Dorsolateral prefrontal cortex (tissue), 120 donors: ENCODE measurements at regions of chr12 and their contacts with region 1.

Region 1: DNA sequence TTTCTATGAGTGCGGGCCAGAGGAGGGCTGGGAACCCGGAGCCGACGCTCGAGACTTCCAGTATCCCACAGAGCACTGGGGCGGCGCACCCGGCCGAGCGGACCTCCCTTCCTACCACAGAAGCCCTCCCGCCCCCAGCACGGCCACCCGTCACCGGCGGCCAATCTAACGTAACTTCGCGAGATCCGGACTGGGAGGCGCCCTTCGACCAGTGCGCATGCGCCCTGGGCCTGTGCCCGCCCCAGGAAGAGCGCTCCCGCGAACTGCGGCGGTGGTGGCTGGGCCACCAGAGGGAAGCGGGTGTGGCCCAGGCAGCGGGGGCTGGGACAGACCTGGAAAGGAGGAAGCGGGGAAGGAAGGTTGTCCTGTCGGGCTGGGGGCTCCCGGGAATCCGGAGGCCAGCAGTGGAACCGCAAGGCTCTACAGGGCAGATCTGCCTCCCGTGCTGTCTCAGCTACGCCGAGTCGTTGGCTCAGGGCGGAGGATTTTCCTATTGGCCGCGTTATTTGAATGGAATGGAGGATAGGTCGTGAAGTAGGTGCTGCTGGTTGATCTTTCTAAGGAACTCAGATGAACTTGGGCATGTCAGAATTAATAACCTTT is at the start of gene PPP1R12A:
- DNase-seq: peak; percentile 91 to 97 (median 94)
- H3K4me3 ChIP-seq: peak within 1 kb of the TSS; percentile 55 to 99 (median 91)
- H3K27ac ChIP-seq: peak within 1 kb of the TSS; percentile 51 to 99 (median 96)
- H3K27me3 ChIP-seq: no peaks in the 10 kb centered on the region
- CTCF ChIP-seq: peak in 49 of 56 donors; percentile 4 to 65 (median 42)
- total RNA-seq, gene PPP1R12A: 96.4 to 234 (median 174) TPM

Region 2: DNA sequence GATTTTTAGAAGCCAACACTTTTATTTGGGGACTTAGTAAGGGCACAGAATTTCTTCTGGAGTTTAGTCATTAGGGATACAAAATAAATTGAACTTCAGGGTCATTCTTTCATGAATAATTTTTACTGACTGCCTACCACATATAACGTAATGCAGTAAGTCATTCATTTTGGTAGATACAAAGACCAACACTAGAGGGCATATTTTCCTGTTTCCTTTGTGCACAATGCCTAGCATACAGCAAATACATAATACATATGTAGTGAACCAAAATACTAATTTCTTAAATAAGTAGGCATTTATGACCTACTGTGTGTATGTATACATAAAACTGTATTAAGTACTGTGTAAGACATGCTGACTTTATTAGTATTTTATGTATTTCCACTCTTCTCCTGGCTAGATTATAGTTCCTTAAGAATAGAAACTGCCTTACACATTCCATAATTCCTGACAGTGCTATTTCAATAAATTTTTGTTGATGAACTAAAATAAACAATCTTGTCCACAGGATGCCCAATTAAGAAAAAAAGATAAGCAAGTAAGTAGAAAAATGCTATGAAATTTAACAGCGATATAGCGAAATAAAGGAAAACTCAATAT is 48.1 kb before region 1 on chr12:
- intact Hi-C with region 1: loop called in 1 of 2 experiments (anchors 5 kb)
- DNase-seq: no peak
- H3K4me3 ChIP-seq: no peak overlapping the region
- H3K27ac ChIP-seq: no peak overlapping the region
- H3K27me3 ChIP-seq: no peaks in the 10 kb centered on the region
- CTCF ChIP-seq: peak; percentile 23 to 70 (median 56)

Region 3: GRCh38 chr12:79920421-79921238 is 14.5 kb before region 1 on chr12:
- intact Hi-C with region 1: no loop called
- DNase-seq: no peak
- H3K4me3 ChIP-seq: no peak overlapping the region
- H3K27ac ChIP-seq: no peak overlapping the region
- H3K27me3 ChIP-seq: no peaks in the 10 kb centered on the region
- CTCF ChIP-seq: no peak

Region 4: DNA sequence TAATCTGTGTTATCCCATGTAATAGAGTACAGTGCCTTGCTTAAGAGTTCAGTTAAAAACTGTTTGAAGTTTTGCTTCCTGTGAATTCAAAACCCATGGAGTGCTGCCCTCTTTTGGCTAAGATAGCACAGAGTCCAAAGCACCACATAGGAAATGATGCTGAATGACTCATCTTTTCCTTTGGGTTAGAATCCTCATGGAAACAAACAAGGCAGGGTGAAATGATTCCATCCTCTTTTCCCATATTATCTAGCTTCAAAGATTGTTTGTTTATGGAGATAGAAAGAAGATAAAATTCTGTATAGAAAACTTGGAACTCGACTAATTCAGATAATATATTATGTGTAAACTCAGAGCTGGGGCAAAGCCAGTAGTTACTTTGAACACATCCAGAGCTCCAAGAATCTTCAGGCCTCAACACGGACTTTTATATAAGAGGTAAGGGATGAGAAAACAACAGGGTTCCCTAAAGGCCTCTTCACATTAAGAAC is 251.7 kb after region 1 on chr12:
- intact Hi-C with region 1: loop called in 1 of 2 experiments (anchors 10 kb)
- DNase-seq: peak in 2 of 10 donors; percentile 6 to 66
- H3K4me3 ChIP-seq: peak overlapping the region in 18 of 59 donors; percentile 3 to 44 (median 28)
- H3K27ac ChIP-seq: peak overlapping the region in 55 of 59 donors; percentile 18 to 91 (median 74)
- H3K27me3 ChIP-seq: no peaks in the 10 kb centered on the region
- CTCF ChIP-seq: peak; percentile 51 to 83 (median 73)